ENCODE measurements at regions of chr1 and their contacts with region 1.

Region 1: GRCh38 chr1:235910357-235911299 is 43.9 kb upstream of the LYST start:
- DNase-seq: peak; percentile 69 to 87
- ATAC-seq: peak; percentile 81
- H3K4me3 ChIP-seq: no peak overlapping the region
- H3K27ac ChIP-seq: peak overlapping the region in 1 of 2 donors; percentile 91
- H3K4me1 ChIP-seq: no peaks in the 10 kb centered on the region
- H3K27me3 ChIP-seq: no peaks in the 10 kb centered on the region

Region 2: DNA sequence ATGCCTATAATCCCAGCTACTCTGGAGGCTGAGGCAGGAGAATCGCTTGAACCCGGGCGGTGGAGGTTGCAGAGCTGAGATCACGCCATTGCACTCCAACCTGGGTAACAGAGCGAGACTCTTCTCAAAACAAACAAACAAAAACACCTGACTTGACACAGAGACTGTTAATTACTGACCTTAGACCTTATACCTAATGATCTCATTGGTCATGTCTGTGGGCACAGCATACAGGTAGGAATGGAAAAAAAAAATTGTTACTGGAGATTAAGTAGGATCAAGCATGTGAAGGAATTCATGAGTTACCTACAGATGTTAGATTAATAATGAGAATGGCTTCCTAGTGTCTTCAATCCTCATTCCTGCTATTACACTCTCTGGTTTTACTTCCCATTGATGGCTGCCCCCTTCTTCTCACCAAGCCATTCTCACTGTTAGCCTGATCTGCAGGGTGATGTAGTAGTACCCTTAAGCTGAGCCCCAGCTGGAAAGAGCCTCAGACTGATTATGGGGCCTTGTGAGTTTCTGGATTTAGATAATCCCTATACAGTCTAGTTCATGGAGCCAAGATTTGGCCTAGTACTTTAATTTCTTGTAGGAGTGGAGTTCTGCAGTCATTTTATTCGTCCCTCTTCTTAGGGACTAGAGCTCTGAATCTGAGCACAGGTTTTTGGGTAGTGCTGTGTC is 534.6 kb before region 1 on chr1:
- intact Hi-C with region 1: no loop called
- DNase-seq: no peak
- ATAC-seq: no peak
- H3K4me3 ChIP-seq: no peak overlapping the region
- H3K27ac ChIP-seq: no peak overlapping the region
- H3K4me1 ChIP-seq: no peaks in the 10 kb centered on the region
- H3K27me3 ChIP-seq: no peaks in the 10 kb centered on the region

Region 3: GRCh38 chr1:235504496-235505222 is 406.0 kb before region 1 on chr1:
- intact Hi-C with region 1: loop called in 1 of 2 experiments (anchors 10 kb)
- DNase-seq: peak; percentile 99 to 100
- ATAC-seq: peak; percentile 98
- H3K4me3 ChIP-seq: peak overlapping the region; percentile 46 to 96
- H3K27ac ChIP-seq: peak overlapping the region; percentile 93 to 96
- H3K4me1 ChIP-seq: peaks cover 0 to 4% of the 10 kb centered on the region in 2 donors
- H3K27me3 ChIP-seq: no peaks in the 10 kb centered on the region

Region 4: GRCh38 chr1:235632506-235633401 is 277.9 kb before region 1 on chr1:
- intact Hi-C with region 1: no loop called
- DNase-seq: peak in 1 of 2 donors; percentile 12
- ATAC-seq: no peak
- H3K4me3 ChIP-seq: no peak overlapping the region
- H3K27ac ChIP-seq: no peak overlapping the region
- H3K4me1 ChIP-seq: no peaks in the 10 kb centered on the region
- H3K27me3 ChIP-seq: no peaks in the 10 kb centered on the region

Region 5: DNA sequence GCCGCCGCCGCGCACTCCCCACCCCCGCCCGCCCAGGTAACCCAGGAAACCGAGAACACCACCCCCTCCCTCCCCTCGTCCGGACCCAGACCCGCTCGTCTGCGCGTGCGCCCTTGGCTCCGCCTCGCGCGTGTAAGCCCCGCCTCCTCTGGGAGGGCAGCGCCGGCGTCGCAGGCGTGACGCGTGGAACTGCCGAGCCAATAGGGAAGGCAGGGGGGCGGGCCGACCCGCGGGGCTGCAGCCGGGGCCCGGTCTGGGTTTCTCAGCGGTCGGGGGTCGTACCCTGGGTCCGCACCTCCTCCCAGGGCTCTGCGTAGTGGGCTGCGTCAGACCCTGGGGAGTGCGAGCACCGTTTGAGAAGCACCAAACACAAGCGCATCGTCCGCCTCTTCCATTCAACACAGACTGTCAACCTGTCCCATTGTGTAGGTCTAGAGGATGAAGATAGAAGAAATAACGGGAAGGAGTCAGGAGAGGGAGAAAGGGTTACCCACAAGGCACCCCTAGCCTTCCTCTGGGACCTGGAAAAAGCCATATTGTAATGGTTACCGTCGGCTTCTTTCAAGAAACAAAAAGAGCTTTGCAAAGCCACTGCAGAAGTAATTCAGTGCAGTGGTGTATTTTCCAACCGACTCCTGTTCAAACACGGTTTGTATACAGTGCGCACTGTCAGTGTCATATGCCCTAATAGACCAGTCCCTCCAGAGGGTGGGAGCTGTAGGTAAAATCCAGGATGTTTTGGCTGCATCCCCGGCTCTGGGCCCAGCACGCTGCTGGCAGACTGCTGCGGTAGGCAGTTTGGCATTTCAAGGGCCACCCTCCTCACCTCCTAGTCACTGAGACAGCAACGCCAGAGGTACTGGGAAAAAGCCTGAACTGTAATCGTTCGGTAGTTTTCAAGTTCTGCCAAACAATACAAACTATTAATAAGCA is 43.4 kb before region 1 on chr1:
- intact Hi-C with region 1: loop called (anchors 5 kb)
- DNase-seq: peak; percentile 97 to 99
- ATAC-seq: peak; percentile 98
- H3K4me3 ChIP-seq: peak overlapping the region; percentile 80 to 87
- H3K27ac ChIP-seq: peak overlapping the region; percentile 59 to 95
- H3K4me1 ChIP-seq: peaks cover 0 to 3% of the 10 kb centered on the region in 2 donors
- H3K27me3 ChIP-seq: no peaks in the 10 kb centered on the region